Activated CD8-positive, alpha-beta T cell treated with anti-CD3 and anti-CD28 coated beads for 36 hours (primary cell): ENCODE measurements at regions of chr2 and their contacts with region 1.

Region 1: GRCh38 chr2:158753641-158754611 is 41.2 kb upstream of the DAPL1 start:
- DNase-seq: peak; percentile 16
- ATAC-seq: peak; percentile 66
- H3K4me3 Mint-ChIP-seq: no peak overlapping the region
- H3K27ac Mint-ChIP-seq: no peak overlapping the region
- H3K4me1 Mint-ChIP-seq: peaks cover 2% of the 10 kb centered on the region
- H3K27me3 Mint-ChIP-seq: peaks cover 17% of the 10 kb centered on the region
- CTCF ChIP-seq: peak; percentile 84

Region 2: GRCh38 chr2:158024288-158024898 is 729.5 kb before region 1 on chr2:
- CTCF ChIA-PET with region 1: interaction called, 31 read pairs
- POLR2A ChIA-PET with region 1: no interaction called
- intact Hi-C with region 1: loop called (anchors 5 kb)
- DNase-seq: peak; percentile 70
- ATAC-seq: peak; percentile 58
- H3K4me3 Mint-ChIP-seq: no peak overlapping the region
- H3K27ac Mint-ChIP-seq: no peak overlapping the region
- H3K4me1 Mint-ChIP-seq: no peaks in the 10 kb centered on the region
- H3K27me3 Mint-ChIP-seq: no peaks in the 10 kb centered on the region
- CTCF ChIP-seq: peak; percentile 82

Region 3: GRCh38 chr2:158034199-158034866 is 719.6 kb before region 1 on chr2:
- CTCF ChIA-PET with region 1: interaction called, 11 read pairs
- POLR2A ChIA-PET with region 1: no interaction called
- intact Hi-C with region 1: no loop called
- DNase-seq: peak; percentile 32
- ATAC-seq: no peak
- H3K4me3 Mint-ChIP-seq: no peak overlapping the region
- H3K27ac Mint-ChIP-seq: no peak overlapping the region
- H3K4me1 Mint-ChIP-seq: no peaks in the 10 kb centered on the region
- H3K27me3 Mint-ChIP-seq: peaks cover 16% of the 10 kb centered on the region
- CTCF ChIP-seq: peak; percentile 16

Region 4: DNA sequence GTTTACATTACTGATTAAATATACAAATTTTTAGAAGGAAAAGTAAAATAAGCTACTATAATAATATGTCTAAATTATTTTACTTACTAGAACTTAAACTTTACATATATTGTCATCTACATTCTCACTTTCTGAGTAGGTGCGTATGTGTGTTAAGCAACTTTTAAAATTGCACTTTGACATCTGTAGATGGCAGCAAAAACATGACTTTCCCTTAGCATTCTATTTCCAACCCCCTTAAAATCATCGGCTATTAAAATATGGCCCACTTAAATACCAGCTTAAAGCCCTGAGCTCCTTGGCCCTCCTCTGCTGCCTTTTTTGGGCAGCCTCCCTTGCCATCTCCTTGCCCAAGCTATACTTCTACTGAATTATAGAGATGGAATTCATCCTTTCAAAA is 574.3 kb before region 1 on chr2:
- CTCF ChIA-PET with region 1: interaction called, 25 read pairs
- POLR2A ChIA-PET with region 1: no interaction called
- intact Hi-C with region 1: loop called (anchors 5 kb)
- DNase-seq: no peak
- ATAC-seq: no peak
- H3K4me3 Mint-ChIP-seq: no peak overlapping the region
- H3K27ac Mint-ChIP-seq: no peak overlapping the region
- H3K4me1 Mint-ChIP-seq: no peaks in the 10 kb centered on the region
- H3K27me3 Mint-ChIP-seq: peaks cover 29% of the 10 kb centered on the region
- CTCF ChIP-seq: peak; percentile 41

Region 5: DNA sequence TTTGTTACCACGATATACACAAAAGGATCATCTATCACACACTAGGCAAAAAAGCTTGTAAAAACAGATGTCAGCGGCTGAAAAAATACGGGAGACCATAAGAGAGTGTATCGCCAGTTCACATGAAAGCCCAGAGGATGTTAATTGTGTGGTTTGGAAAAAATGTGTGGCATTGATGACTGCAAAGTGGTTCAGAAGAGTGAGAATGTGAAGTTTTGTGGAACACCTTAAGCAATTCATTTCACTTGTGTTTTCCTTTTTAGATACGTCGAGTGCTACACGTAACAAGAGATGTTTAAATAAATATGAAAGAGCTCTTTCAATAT is 20.5 kb before region 1 on chr2:
- CTCF ChIA-PET with region 1: interaction called, 20 read pairs
- POLR2A ChIA-PET with region 1: no interaction called
- intact Hi-C with region 1: no loop called
- DNase-seq: no peak
- ATAC-seq: no peak
- H3K4me3 Mint-ChIP-seq: no peak overlapping the region
- H3K27ac Mint-ChIP-seq: no peak overlapping the region
- H3K4me1 Mint-ChIP-seq: no peaks in the 10 kb centered on the region
- H3K27me3 Mint-ChIP-seq: peaks cover 6% of the 10 kb centered on the region
- CTCF ChIP-seq: no peak

Region 6: GRCh38 chr2:158773121-158773520 is 19.2 kb after region 1 on chr2:
- CTCF ChIA-PET with region 1: interaction called, 11 read pairs
- POLR2A ChIA-PET with region 1: no interaction called
- intact Hi-C with region 1: no loop called
- DNase-seq: no peak
- ATAC-seq: no peak
- H3K4me3 Mint-ChIP-seq: no peak overlapping the region
- H3K27ac Mint-ChIP-seq: no peak overlapping the region
- H3K4me1 Mint-ChIP-seq: no peaks in the 10 kb centered on the region
- H3K27me3 Mint-ChIP-seq: no peaks in the 10 kb centered on the region
- CTCF ChIP-seq: no peak

Region 7: DNA sequence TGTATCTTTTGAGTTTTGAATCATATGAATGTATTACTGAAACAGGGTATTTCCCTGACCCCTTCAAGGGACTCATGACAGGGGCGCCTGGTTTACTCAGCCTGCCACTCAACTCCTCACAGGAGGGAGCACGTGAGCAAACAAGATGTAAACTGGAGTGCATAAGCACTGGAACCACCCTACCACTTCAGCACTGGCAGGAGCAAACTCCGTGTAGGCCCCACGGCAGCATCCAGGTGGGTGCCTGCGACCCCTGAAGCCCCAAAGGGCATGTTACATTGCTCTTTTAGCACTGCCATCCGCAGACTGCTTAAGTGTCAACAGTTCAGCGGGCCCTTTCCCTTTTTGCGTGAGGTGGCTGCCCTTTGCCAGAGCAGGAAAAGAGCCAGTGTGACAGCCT is 33.0 kb after region 1 on chr2:
- CTCF ChIA-PET with region 1: no interaction called
- POLR2A ChIA-PET with region 1: no interaction called
- intact Hi-C with region 1: no loop called
- DNase-seq: no peak
- ATAC-seq: no peak
- H3K4me3 Mint-ChIP-seq: no peak overlapping the region
- H3K27ac Mint-ChIP-seq: no peak overlapping the region
- H3K4me1 Mint-ChIP-seq: no peaks in the 10 kb centered on the region
- H3K27me3 Mint-ChIP-seq: peaks cover 9% of the 10 kb centered on the region
- CTCF ChIP-seq: no peak